ENCODE measurements at regions of chr1 and their contacts with region 1.

Region 1: DNA sequence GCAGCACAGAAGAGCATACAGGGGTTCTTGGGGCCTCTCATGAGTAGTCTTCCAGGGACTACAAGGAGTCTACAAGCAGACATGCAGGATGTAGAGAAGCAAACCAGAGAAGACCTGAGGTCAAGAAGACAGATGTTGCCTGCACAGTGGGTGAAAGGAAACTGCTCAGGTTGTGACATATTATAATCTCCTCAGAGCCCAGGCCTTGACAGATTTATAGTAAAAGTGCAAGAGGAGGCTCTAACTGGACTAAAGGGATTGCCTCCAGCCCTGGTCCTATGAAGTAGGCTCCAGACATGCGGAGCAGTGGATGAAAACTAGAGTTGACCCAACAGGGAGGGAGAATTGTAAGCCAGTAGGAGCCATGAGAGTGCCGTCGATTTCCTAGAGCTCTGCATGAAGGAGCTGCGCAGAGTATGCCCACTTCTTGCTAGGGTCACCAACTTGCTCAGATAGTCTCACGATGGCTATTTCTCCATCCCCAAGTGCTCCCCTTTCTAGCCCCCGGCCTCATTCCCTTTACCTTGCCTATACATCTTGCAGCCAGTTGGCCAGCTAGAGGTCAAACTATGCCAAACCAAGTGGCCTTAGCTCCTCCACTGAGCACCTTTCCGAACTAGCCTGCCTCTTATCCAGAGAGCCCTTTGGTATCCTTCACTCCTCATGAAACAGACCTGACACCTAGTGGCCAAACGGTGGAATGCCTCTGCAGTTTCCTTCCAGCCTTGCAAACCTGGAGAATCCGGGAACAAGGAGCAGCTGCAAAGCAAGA is 36.2 kb upstream of the IPO9 start:
- DNase-seq: peak in 8 of 9 donors; percentile 12 to 48 (median 34)
- ATAC-seq: peak; percentile 67
- H3K4me3 ChIP-seq: no peak overlapping the region
- H3K4me3 Mint-ChIP-seq: no peak overlapping the region
- H3K27ac ChIP-seq: no peak overlapping the region
- H3K27ac Mint-ChIP-seq: peak overlapping the region in 1 of 9 donors; percentile 49
- H3K4me1 ChIP-seq: no peaks in the 10 kb centered on the region
- H3K4me1 Mint-ChIP-seq: peaks cover 0 to 22% (median 0%) of the 10 kb centered on the region in 7 donors
- H3K27me3 ChIP-seq: no peaks in the 10 kb centered on the region
- H3K27me3 Mint-ChIP-seq: peaks cover 0 to 4% (median 0%) of the 10 kb centered on the region in 5 donors

Region 2: GRCh38 chr1:201559679-201560162 is 233.0 kb before region 1 on chr1:
- CTCF ChIA-PET with region 1: interaction called, 67 read pairs
- POLR2A ChIA-PET with region 1: no interaction called
- intact Hi-C with region 1: loop called (anchors 1 kb)
- DNase-seq: peak; percentile 30 to 64 (median 56)
- ATAC-seq: peak; percentile 94
- H3K4me3 ChIP-seq: no peak overlapping the region
- H3K4me3 Mint-ChIP-seq: peak overlapping the region in 1 of 10 donors; percentile 54
- H3K27ac ChIP-seq: no peak overlapping the region
- H3K27ac Mint-ChIP-seq: no peak overlapping the region
- H3K4me1 ChIP-seq: no peaks in the 10 kb centered on the region
- H3K4me1 Mint-ChIP-seq: peaks cover 0 to 6% (median 3%) of the 10 kb centered on the region in 7 donors
- H3K27me3 ChIP-seq: no peaks in the 10 kb centered on the region
- H3K27me3 Mint-ChIP-seq: no peaks in the 10 kb centered on the region

Region 3: GRCh38 chr1:201709564-201710295 is 83.0 kb before region 1 on chr1:
- CTCF ChIA-PET with region 1: interaction called, 45 read pairs
- POLR2A ChIA-PET with region 1: no interaction called
- intact Hi-C with region 1: loop called in 1 of 2 experiments (anchors 1 kb)
- DNase-seq: peak; percentile 17 to 59 (median 40)
- ATAC-seq: peak; percentile 80
- H3K4me3 ChIP-seq: no peak overlapping the region
- H3K4me3 Mint-ChIP-seq: no peak overlapping the region
- H3K27ac ChIP-seq: no peak overlapping the region
- H3K27ac Mint-ChIP-seq: no peak overlapping the region
- H3K4me1 ChIP-seq: no peaks in the 10 kb centered on the region
- H3K4me1 Mint-ChIP-seq: peaks cover 0 to 3% (median 0%) of the 10 kb centered on the region in 7 donors
- H3K27me3 ChIP-seq: peaks cover 0 to 4% of the 10 kb centered on the region in 2 donors
- H3K27me3 Mint-ChIP-seq: peaks cover 0 to 7% (median 0%) of the 10 kb centered on the region in 5 donors

Region 4: GRCh38 chr1:201750939-201751338 is 41.8 kb before region 1 on chr1:
- CTCF ChIA-PET with region 1: no interaction called
- POLR2A ChIA-PET with region 1: no interaction called
- intact Hi-C with region 1: no loop called
- DNase-seq: no peak
- ATAC-seq: no peak
- H3K4me3 ChIP-seq: no peak overlapping the region
- H3K4me3 Mint-ChIP-seq: no peak overlapping the region
- H3K27ac ChIP-seq: no peak overlapping the region
- H3K27ac Mint-ChIP-seq: peak overlapping the region in 3 of 9 donors; percentile 12 to 51 (median 47)
- H3K4me1 ChIP-seq: no peaks in the 10 kb centered on the region
- H3K4me1 Mint-ChIP-seq: peaks cover 0 to 13% (median 8%) of the 10 kb centered on the region in 7 donors
- H3K27me3 ChIP-seq: no peaks in the 10 kb centered on the region
- H3K27me3 Mint-ChIP-seq: peaks cover 0 to 36% (median 11%) of the 10 kb centered on the region in 5 donors

Measured in naive thymus-derived CD4-positive, alpha-beta T cell (primary cell).